Activated T-helper 2 cell treated with anti-CD3 and anti-CD28 coated beads, Interferon-gamma antibody, Interleukin-2, Interleukin-4, amounts not matched to agents 10 μg/mL and 5 μg/mL and 100 μg/mL, durations not matched to agents 14 hours and 24 hours and 36 hours (primary cell): ENCODE measurements at regions of chr12 and their contacts with region 1.

Region 1: DNA sequence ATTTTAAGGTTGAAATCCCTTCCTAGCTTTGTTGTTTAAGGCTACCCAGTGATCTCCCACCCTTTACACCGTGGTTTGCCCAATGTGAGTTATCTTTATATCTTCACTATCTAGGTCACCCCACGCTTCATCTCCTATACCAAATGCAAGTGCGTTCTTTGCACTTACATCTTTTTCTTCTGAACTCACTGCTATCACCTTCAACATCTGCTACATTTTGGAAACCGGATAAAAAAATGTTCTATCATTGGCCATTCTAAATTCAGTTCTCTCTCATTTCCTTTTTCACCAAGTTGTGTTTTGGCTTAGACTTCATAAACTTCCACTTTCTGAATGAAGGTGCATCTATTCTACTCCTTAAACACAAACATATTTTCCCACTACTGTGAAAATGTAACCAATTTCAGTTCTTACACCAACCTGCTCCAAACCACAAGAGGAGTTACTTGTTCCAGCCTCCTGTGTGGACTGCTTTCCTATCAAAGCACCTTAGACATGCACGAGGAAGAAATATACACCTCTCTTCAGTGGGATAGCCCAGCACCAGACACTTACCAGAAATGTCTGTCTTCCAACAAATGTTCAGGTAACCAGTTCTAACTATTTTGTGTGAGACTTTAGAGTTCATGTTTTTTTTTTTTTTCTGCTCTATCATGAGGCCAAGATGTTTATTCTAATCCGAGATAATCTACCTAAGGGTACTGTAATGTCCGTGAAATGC is 21.9 kb downstream of the CLEC9A start:
- DNase-seq: no peak
- H3K4me3 Mint-ChIP-seq: peak overlapping the region; percentile 7
- H3K27ac Mint-ChIP-seq: peak overlapping the region; percentile 1
- H3K4me1 Mint-ChIP-seq: peaks cover 12% of the 10 kb centered on the region
- H3K27me3 Mint-ChIP-seq: peaks cover 22% of the 10 kb centered on the region

Region 2: GRCh38 chr12:10147714-10148403 is 95.5 kb after region 1 on chr12:
- intact Hi-C with region 1: loop called (anchors 5 kb)
- DNase-seq: no peak
- H3K4me3 Mint-ChIP-seq: no peak overlapping the region
- H3K27ac Mint-ChIP-seq: no peak overlapping the region
- H3K4me1 Mint-ChIP-seq: no peaks in the 10 kb centered on the region
- H3K27me3 Mint-ChIP-seq: peaks cover 41% of the 10 kb centered on the region